Esophagus muscularis mucosa (tissue), 4 donors: ENCODE measurements at regions of chr6 and their contacts with region 1.

Region 1: DNA sequence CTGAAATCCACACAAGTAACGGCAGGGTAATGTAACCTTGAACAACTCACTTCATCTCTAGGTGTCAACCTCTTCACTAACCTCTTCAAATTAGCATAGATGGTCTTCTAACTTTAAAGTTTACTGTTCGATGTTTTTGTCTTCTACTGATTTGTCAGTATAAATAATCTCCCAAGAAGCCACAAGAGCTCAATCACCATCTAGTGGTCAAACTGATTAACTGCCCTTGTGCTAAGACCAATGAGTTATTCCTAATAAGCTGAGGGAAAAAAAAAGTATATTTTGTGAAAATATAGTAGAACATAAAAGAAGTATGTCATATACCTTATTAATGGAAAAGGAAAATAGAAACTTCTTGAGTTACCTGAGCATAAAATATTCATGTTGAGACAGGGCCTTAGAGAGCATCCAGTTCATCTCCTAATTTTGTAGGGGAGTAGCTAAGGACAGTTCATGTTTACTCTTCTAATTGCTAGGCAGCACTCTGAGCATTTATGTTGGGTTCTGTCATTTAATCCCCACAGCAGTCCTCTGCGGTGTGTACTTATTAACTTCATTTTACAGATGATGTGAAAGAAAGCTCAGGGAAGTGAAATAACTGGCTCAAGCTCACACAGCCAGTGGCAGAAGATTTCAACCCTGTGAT is 317.1 kb downstream of the ESR1 start:
- DNase-seq: no peak
- H3K4me3 ChIP-seq: no peak overlapping the region
- H3K27ac ChIP-seq: no peak overlapping the region
- H3K4me1 ChIP-seq: peaks cover 12 to 14% (median 13%) of the 10 kb centered on the region in 4 donors
- H3K27me3 ChIP-seq: no peaks in the 10 kb centered on the region
- CTCF ChIP-seq: peak; percentile 45 to 76 (median 52)
- EP300 ChIP-seq: no peak
- POLR2A ChIP-seq: no peak

Region 2: DNA sequence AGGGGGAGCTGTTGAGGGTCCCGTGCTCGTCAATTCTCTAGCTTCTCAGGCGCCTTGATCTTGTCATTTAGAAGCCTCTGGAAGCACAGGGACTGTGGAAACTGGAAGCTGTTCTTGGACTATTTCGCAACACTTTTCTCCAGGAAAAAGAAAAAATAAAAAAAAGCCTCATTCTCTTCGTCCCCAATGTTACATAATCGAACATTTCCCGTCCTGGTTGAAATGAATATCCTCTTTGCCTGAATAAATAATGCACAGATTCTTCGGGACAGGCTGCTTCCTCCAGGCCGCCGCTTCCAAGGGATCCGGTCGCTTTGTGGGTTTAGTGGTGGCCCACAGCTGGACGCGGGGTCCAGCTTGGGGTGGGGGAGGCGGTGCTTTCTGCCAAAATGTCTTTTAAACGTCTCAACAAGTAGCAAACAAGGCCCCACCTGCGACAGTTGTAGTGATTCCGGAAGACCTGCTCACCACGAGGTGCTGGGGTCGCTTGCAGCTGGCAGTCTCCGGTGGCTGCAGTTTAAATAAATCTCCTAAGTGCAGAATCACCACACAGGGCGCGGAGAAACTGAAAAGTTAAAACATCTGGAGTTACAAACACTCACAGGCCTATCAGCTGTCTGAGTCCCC is 443.0 kb before region 1 on chr6:
- intact Hi-C with region 1: loop called (anchors 10 kb)
- DNase-seq: peak; percentile 91
- H3K4me3 ChIP-seq: peak overlapping the region; percentile 23 to 46 (median 31)
- H3K27ac ChIP-seq: peak overlapping the region; percentile 42 to 62 (median 58)
- H3K4me1 ChIP-seq: peaks cover 0 to 16% (median 9%) of the 10 kb centered on the region in 4 donors
- H3K27me3 ChIP-seq: no peaks in the 10 kb centered on the region
- CTCF ChIP-seq: no peak
- EP300 ChIP-seq: no peak
- POLR2A ChIP-seq: no peak

Region 3: GRCh38 chr6:151765444-151765886 is 359.1 kb before region 1 on chr6:
- intact Hi-C with region 1: loop called (anchors 2 kb)
- DNase-seq: no peak
- H3K4me3 ChIP-seq: no peak overlapping the region
- H3K27ac ChIP-seq: no peak overlapping the region
- H3K4me1 ChIP-seq: peaks cover 0 to 8% (median 3%) of the 10 kb centered on the region in 4 donors
- H3K27me3 ChIP-seq: peaks cover 0 to 3% (median 1%) of the 10 kb centered on the region in 4 donors
- CTCF ChIP-seq: peak; percentile 52 to 77 (median 57)
- EP300 ChIP-seq: no peak
- POLR2A ChIP-seq: no peak

Region 4: GRCh38 chr6:152160346-152160745 is 35.8 kb after region 1 on chr6:
- intact Hi-C with region 1: no loop called
- DNase-seq: no peak
- H3K4me3 ChIP-seq: no peak overlapping the region
- H3K27ac ChIP-seq: no peak overlapping the region
- H3K4me1 ChIP-seq: no peaks in the 10 kb centered on the region
- H3K27me3 ChIP-seq: no peaks in the 10 kb centered on the region
- CTCF ChIP-seq: no peak
- EP300 ChIP-seq: no peak
- POLR2A ChIP-seq: no peak